AG04450 (cell line): ENCODE measurements at regions of chr14 and their contacts with region 1.

Region 1: DNA sequence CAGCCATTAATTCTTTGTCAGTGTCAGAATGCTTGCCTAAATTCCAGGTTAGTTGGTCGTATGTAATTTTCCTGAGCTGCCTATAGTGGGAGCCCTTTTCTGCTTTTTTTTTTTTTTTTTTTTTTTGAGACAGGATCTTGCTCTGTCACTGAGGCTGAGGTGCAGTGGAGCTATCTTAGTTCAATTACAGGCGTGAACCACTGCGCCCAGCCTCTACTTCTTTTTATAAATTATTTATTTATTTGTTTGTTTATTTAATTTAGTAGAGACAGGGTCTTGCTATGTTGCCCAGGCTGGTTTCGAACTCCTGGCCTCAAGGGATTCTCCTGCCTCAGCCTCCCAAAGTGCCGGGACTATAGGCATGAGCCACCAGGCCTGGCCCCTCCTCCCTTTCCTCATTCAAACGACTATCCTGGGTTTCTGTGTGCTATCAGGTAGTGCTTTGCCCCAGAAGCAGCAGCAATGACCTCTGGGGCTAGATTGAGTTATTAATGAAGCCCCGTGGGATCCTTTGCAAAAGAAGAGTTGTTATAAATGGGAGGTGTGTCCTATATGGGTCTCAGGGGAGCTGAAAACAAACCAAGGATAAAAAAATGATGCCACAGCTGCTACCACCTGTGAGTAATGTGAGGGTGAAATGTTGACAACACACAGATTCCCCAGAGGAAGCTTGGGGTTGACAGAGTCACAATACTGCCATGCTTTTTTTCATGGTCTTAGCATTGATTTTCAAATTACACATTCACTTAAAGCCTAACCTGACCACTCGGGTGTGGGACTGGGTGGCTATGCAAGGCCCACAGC is 34.6 kb upstream of the NFKBIA start:
- DNase-seq: no peak
- H3K4me3 ChIP-seq: no peak overlapping the region
- H3K27ac ChIP-seq: no peak overlapping the region
- H3K27me3 ChIP-seq: peaks cover 3% of the 10 kb centered on the region
- CTCF ChIP-seq: peak; percentile 65

Region 2: DNA sequence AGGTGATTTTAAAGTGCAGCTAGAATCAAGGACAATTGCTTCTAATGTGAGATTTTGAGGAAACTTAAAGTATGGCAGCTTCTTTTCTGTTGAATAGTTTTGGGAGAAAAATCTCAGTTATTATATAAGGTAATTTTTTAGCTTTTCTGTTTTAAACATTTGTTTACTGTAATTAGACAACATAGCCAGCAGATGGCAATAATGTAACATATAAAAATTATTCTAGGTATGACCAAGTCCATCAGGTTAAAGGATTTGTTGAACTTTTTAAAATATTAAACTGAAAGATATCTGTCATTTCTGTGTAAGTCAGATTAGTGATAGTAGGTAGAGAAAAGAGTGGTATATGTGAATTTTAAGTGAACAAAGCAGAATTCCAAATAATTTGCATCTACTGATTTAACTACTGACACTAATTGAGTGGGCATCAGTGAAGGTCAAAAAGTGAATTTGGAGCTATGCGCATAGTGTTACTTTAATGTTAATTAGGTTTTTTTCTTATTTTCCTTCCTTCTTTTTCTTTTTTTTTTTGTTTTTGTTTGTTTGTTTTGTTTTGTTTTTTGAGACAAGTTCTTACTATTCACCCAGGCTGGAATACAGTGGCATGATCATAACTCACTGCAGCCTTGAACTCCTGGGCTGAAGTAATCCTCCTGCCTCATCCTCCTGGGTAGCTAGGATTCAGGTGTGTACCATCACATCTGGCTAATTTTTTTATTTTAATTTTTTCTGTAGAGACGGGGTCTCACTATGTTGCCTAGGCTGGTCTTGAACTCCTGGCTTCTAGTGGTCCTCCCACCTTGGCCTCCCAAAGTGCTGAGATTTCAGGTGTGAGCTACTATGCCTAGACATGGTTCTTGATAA is 298.2 kb before region 1 on chr14:
- CTCF ChIA-PET with region 1: interaction called, 13 read pairs
- POLR2A ChIA-PET with region 1: no interaction called
- DNase-seq: no peak
- H3K4me3 ChIP-seq: no peak overlapping the region
- H3K27ac ChIP-seq: no peak overlapping the region
- H3K27me3 ChIP-seq: no peaks in the 10 kb centered on the region
- CTCF ChIP-seq: peak; percentile 29

Region 3: DNA sequence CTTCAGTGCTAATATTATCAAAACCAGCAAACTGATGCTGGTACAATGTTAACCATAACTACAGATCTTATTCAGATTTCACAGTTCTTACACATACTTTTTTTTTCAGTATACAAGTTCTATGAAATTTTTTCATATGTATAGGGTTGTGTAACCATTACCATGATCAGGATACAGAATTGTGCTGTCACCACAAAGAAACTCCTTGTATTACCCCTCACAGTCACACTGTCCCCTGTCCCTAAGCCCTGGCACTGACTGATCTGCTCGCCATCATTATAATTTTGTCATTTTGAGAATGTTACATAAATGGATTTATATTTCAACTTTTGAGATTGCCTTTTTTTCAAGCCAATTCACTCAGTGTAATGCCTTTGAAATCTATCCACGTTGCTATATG is 13.3 kb before region 1 on chr14:
- CTCF ChIA-PET with region 1: interaction called, 10 read pairs
- POLR2A ChIA-PET with region 1: no interaction called
- DNase-seq: no peak
- H3K4me3 ChIP-seq: no peak overlapping the region
- H3K27ac ChIP-seq: no peak overlapping the region
- H3K27me3 ChIP-seq: no peaks in the 10 kb centered on the region
- CTCF ChIP-seq: no peak

Region 4: DNA sequence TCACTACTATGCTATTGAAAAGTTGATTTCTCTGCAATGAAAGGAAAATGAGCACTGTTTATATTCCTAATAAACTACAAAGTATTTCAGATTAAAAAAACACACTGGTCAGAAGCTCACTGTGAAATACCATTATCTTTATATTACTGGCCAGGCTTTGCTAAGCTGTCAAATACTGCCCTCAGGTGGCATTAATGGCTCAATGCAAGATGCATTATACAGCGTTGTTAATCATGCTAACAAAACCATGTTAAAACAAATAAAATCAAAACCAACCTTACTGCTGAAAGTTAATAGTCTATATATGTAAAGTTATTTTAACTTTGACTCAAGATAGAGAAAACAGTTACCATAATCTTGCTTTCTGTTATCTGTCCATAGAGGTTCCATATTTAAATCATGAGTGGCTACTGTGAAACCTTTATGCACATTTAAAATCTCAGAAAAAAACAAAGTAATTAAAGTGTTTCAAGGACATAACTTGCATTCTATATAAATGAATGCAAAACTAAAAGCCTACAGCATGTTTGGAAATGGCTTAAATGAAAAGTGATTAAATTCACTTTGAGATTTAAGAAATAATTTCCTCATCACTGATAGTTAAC is 248.3 kb after region 1 on chr14:
- CTCF ChIA-PET with region 1: interaction called, 11 read pairs
- POLR2A ChIA-PET with region 1: no interaction called
- DNase-seq: peak; percentile 27
- H3K4me3 ChIP-seq: no peak overlapping the region
- H3K27ac ChIP-seq: no peak overlapping the region
- H3K27me3 ChIP-seq: no peaks in the 10 kb centered on the region
- CTCF ChIP-seq: peak; percentile 89

Region 5: GRCh38 chr14:35747379-35747778 is 308.3 kb after region 1 on chr14:
- CTCF ChIA-PET with region 1: interaction called, 11 read pairs
- POLR2A ChIA-PET with region 1: no interaction called
- DNase-seq: peak; percentile 6
- H3K4me3 ChIP-seq: no peak overlapping the region
- H3K27ac ChIP-seq: peak overlapping the region; percentile 25
- H3K27me3 ChIP-seq: no peaks in the 10 kb centered on the region
- CTCF ChIP-seq: no peak

Region 6: DNA sequence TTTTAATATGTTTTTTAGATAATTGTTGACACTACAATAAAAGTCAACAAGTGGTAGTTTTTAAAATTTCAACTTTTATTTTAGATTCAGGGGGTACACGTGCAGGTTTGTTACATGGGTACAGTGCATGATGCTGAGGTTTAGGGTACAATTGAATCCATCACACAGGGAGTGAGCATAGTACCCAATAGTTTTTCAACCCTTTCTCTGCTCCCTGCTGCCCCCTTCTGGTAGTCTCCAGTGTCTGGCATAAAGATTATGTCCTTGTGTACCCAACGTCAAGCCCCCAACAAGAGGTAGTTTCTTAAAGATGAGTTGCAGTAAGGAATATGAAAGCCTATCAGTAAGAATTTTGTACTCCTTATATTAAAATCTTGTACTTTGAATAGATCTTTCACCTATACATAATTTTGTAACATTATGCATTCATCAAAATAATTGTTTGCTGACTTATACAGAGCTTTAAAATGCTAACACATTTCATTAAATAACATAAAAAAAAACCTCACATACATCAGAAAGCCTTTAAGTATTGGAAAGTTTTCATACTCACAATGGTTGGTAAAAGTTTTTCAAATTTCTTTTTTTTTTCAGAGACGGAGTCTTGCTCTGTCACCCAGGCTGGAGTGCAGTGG is 375.4 kb after region 1 on chr14:
- CTCF ChIA-PET with region 1: interaction called, 14 read pairs
- POLR2A ChIA-PET with region 1: no interaction called
- DNase-seq: no peak
- H3K4me3 ChIP-seq: no peak overlapping the region
- H3K27ac ChIP-seq: no peak overlapping the region
- H3K27me3 ChIP-seq: peaks cover 4% of the 10 kb centered on the region
- CTCF ChIP-seq: peak; percentile 83